Upper lobe of right lung (tissue), 1 donor: ENCODE measurements at regions of chr11 and their contacts with region 1.

Region 1: GRCh38 chr11:66136752-66137123 is 66.7 kb downstream of the PACS1 start:
- DNase-seq: no peak
- ATAC-seq: no peak
- H3K4me3 ChIP-seq: no peak overlapping the region
- H3K27ac ChIP-seq: no peak overlapping the region
- H3K4me1 ChIP-seq: peaks cover 5% of the 10 kb centered on the region
- H3K27me3 ChIP-seq: no peaks in the 10 kb centered on the region
- CTCF ChIP-seq: no peak

Region 2: GRCh38 chr11:66069715-66070603 is 66.8 kb before region 1 on chr11 and contains the start of gene PACS1:
- intact Hi-C with region 1: loop called (anchors 10 kb)
- DNase-seq: peak; percentile 92
- ATAC-seq: peak; percentile 88
- H3K4me3 ChIP-seq: peak within 1 kb of the TSS; percentile 82
- H3K27ac ChIP-seq: peak within 1 kb of the TSS; percentile 93
- H3K4me1 ChIP-seq: peaks cover 26% of the 10 kb centered on the region
- H3K27me3 ChIP-seq: no peaks in the 10 kb centered on the region
- CTCF ChIP-seq: peak; percentile 2
- total RNA-seq, gene PACS1: 55.9 TPM

Region 3: GRCh38 chr11:66268283-66268951 is 131.7 kb after region 1 on chr11 and contains the start of gene RAB1B:
- intact Hi-C with region 1: no loop called
- DNase-seq: peak; percentile 100
- ATAC-seq: peak; percentile 88
- H3K4me3 ChIP-seq: peak within 1 kb of the TSS; percentile 99
- H3K27ac ChIP-seq: peak within 1 kb of the TSS; percentile 90
- H3K4me1 ChIP-seq: peaks cover 16% of the 10 kb centered on the region
- H3K27me3 ChIP-seq: no peaks in the 10 kb centered on the region
- CTCF ChIP-seq: no peak
- total RNA-seq, gene RAB1B: 138 TPM